A549 (cell line): ENCODE measurements at regions of chr14 and their contacts with region 1.

Region 1: DNA sequence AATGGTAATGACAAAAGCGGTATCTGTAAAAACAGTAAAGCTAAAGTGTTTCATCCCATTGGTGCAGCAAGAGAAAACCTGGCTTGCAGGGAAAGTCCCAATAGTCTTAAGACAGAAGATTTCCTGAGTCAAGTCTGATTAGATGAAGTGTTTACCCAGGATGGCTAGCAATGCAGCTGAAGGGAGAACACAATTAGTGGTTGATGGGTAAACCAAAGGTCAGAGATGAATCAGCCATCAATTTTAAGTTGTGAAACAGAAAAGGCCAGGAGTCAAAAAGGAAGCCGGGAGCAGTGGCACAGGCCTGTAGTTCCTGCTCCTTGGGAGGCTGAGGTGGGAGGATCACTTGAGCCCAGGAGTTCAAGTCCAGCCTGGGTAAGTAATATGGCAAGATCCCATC is 52.6 kb downstream of the SEC23A start:
- DNase-seq: peak in 1 of 2 experiments; percentile 21
- ATAC-seq: no peak
- H3K4me3 ChIP-seq: no peak overlapping the region
- H3K27ac ChIP-seq: no peak overlapping the region
- H3K4me1 ChIP-seq: peaks cover 7% of the 10 kb centered on the region; the same call in 1 of the 3 replicates
- CTCF ChIP-seq: no peak
- EP300 ChIP-seq: no peak
- POLR2A ChIP-seq: no peak
- RAD21 ChIP-seq: no peak

Region 2: DNA sequence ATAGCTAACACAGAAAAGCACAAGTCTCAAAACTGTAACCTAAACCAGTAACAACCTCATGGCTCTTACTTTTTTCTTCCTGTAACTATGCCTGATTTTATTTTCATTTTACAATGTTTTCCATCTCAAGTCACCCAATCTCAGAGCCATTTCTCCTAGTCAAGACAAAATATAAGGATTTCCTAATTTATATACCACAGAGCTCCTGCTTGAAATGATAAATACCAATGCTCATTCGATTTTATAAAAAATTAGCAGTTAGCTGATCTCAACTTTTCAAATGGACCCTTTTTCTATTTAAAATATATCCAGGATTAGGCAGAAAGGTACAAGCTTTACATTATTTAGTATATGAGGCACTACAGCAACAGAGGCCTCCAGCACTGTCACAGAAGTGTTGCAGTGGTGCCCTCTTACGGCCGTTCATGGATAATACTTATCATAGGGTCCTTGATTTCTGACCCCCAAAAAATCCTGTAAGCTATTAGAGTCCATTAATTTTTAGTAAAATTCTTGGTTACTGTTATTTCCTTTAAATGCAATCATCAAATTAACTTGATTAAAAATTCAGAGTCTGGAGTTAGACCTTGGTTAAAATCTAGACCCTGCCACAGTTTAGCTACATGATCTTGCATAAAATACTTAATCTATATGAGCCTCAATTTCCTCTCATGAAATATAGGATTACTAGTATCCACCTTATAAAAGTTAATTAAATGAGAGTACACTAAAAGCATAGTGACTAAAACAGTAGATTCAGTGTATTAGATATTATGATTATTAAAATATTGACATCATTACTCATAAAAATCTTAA is 15.7 kb before region 1 on chr14:
- CTCF ChIA-PET with region 1: interaction called, 10 read pairs
- POLR2A ChIA-PET with region 1: no interaction called
- DNase-seq: peak; percentile 13 to 22
- ATAC-seq: peak; percentile 68 to 81; a peak in 3 of 6 replicates
- H3K4me3 ChIP-seq: no peak overlapping the region
- H3K27ac ChIP-seq: no peak overlapping the region
- H3K4me1 ChIP-seq: no peaks in the 10 kb centered on the region
- CTCF ChIP-seq: peak; percentile 50
- EP300 ChIP-seq: no peak
- POLR2A ChIP-seq: no peak
- RAD21 ChIP-seq: 0 out of 5 replicates have a peak, but pooled peaks have one; percentile 19